Esophagus muscularis mucosa (tissue), 4 donors: ENCODE measurements at regions of chrX and their contacts with region 1.

Region 1: GRCh38 chrX:76454456-76454927 is 27.0 kb downstream of the MAGEE1 start:
- DNase-seq: no peak
- H3K4me3 ChIP-seq: no peak overlapping the region
- H3K27ac ChIP-seq: no peak overlapping the region
- H3K4me1 ChIP-seq: peaks cover 0 to 4% (median 0%) of the 10 kb centered on the region in 4 donors
- H3K27me3 ChIP-seq: no peaks in the 10 kb centered on the region
- CTCF ChIP-seq: peak; percentile 42 to 51 (median 44)
- EP300 ChIP-seq: no peak
- POLR2A ChIP-seq: no peak

Region 2: GRCh38 chrX:76279000-76279399 is 175.5 kb before region 1 on chrX:
- intact Hi-C with region 1: loop called (anchors 1 kb)
- DNase-seq: no peak
- H3K4me3 ChIP-seq: no peak overlapping the region
- H3K27ac ChIP-seq: no peak overlapping the region
- H3K4me1 ChIP-seq: no peaks in the 10 kb centered on the region
- H3K27me3 ChIP-seq: no peaks in the 10 kb centered on the region
- CTCF ChIP-seq: peak; percentile 44 to 55 (median 46)
- EP300 ChIP-seq: no peak
- POLR2A ChIP-seq: no peak